Right cardiac atrium (tissue), 5 donors: ENCODE measurements at regions of chr17 and their contacts with region 1.

Region 1: DNA sequence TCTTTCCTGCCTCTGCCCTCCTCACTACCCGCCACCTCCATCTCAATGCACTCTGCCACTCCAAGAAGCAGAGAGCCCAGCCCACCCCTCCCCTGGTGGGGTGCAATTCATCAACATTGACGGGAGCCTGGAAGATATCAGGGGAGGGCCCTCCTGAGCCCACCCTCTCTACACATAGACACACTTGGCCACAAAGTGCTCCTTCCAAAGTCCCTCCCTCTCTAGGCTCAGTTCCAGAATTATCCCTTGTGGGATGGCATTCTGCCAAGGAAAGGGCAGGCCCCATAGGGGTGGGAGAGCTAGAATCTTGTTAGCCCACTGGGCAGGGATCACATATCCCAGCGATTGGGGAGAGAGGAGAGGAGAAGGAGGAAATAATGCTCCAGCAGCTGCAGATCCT is 66.2 kb downstream of the TMEM132E start:
- DNase-seq: no peak
- ATAC-seq: no peak
- H3K4me3 ChIP-seq: no peak overlapping the region
- H3K27ac ChIP-seq: no peak overlapping the region
- H3K4me1 ChIP-seq: no peaks in the 10 kb centered on the region
- H3K27me3 ChIP-seq: no peaks in the 10 kb centered on the region

Region 2: DNA sequence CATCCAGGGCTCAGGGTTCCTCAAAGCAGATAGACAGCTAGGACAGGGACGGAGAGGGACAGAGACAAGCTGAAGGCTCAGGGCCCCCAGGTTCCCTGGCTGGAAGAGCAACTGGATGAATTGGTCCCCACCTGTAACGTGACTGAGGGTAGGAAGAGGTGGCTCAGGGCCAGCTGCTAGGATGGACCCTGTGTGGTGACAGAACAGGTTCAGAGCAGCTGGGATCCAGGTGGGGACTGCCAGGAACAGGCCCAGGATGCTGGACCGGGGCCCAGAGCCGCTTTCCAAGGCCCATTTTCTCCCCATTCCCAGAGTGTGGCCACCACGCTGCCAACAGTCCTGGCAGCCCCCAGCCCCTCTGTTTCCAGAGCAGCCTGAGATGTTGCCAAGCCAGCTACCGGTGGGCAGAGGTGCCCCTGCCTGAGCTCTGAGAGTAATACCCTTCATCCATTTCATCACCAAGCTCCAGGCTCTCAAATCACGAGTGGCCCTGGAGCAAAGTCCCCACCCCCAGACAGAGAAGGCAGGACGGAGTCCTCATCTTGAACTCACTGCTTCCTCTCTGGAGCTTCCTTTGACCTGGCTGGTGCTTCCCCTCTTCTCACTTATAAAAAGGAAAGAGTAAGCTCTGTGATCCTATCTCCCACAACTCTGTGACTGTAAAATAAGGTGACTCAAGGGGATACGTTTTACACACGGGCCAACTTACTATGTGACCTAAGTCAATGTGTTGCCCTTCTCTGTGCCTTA is 13.4 kb after region 1 on chr17:
- intact Hi-C with region 1: no loop called
- DNase-seq: no peak
- ATAC-seq: no peak
- H3K4me3 ChIP-seq: no peak overlapping the region
- H3K27ac ChIP-seq: no peak overlapping the region
- H3K4me1 ChIP-seq: peaks cover 2% of the 10 kb centered on the region
- H3K27me3 ChIP-seq: no peaks in the 10 kb centered on the region

Region 3: DNA sequence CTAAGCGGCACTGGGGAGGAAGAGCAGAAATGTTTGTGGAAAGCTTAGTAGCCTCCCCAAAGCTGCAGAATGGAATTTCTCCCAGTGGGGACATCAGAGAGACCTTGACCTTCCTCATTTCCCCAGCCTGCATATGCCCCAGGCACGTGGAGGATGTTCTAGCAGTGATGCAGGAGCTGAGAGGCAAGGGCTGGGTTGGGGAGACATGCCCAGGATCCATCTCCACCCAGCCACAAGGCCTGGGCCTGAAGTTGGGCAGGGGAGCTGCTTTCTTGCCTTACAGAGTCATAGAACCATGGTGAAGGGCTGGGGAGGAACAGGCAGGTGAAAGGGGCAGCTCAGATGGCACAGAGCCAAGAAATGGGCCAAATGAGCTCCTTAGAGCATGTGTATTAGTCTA is 37.8 kb after region 1 on chr17:
- intact Hi-C with region 1: no loop called
- DNase-seq: no peak
- ATAC-seq: no peak
- H3K4me3 ChIP-seq: no peak overlapping the region
- H3K27ac ChIP-seq: no peak overlapping the region
- H3K4me1 ChIP-seq: no peaks in the 10 kb centered on the region
- H3K27me3 ChIP-seq: no peaks in the 10 kb centered on the region

Region 4: DNA sequence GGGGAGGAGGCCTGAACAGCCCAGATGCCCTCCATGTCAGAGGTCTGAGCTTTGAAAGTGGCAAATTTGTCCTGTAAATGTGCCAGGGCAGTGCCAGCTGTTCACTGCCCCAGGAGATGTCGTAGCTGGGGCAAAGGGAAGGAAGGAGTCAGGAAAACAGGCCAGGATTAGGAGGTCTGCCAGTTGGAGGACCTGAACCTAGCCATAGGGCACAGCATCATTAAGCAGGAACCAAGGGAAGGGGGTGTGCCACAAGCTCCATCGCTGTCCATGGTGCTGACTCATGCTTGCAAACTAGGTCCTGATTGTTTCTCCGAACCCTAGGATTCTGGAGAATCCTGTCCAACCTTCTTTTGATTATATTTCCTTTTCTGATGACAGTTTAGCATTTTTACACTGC is 57.9 kb after region 1 on chr17:
- intact Hi-C with region 1: loop called in 1 of 4 experiments (anchors 10 kb)
- DNase-seq: peak in 1 of 3 donors; percentile 65
- ATAC-seq: no peak
- H3K4me3 ChIP-seq: no peak overlapping the region
- H3K27ac ChIP-seq: no peak overlapping the region
- H3K4me1 ChIP-seq: no peaks in the 10 kb centered on the region
- H3K27me3 ChIP-seq: peaks cover 6% of the 10 kb centered on the region